ENCODE measurements at regions of chr7 and their contacts with region 1.

Region 1: DNA sequence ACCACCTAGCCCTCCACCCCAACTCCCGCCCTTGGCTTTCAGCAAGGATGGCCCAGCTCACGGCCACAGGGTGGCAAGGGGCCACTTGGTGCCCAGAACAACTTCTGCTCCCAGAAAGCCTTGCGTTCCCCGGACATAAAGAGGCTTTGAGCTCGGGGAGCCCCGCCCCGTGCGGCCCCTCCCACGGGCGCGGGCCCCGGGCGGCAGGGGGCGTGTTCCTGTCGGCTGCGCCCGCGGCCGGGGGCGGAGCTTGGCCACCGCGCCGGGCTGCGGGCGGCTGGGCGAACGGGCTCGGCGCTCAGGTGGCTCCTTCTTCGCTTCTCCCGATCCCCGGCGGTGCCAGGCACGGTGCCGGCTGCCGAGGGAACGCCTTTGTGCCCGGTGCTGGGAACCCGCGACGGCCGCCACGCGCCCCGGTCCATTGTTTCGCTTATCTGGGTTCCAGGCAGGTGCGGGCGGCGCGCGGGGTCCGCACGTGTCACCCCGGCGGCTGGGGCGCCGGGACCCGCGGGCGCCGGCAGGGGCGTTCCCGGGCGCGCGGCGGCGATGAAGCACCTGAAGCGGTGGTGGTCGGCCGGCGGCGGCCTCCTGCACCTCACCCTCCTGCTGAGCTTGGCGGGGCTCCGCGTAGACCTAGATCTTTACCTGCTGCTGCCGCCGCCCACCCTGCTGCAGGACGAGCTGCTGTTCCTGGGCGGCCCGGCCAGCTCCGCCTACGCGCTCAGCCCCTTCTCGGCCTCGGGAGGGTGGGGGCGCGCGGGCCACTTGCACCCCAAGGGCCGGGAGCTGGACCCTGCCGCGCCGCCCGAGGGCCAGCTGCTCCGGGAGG is at the start of gene NFE2L3:
- DNase-seq: peak; percentile 77
- H3K4me3 ChIP-seq: peak within 1 kb of the TSS; percentile 42 to 71 (median 68)
- H3K27ac ChIP-seq: peak within 1 kb of the TSS; percentile 92
- H3K4me1 ChIP-seq: peaks cover 45% of the 10 kb centered on the region
- H3K27me3 ChIP-seq: peaks cover 0 to 4% of the 10 kb centered on the region in 2 experiments
- CTCF ChIP-seq: peak in 1 of 2 donors; percentile 7
- POLR2A ChIP-seq: peak; percentile 46
- total RNA-seq, gene NFE2L3: 28.4 and 40.2 TPM in 2 replicates

Region 2: DNA sequence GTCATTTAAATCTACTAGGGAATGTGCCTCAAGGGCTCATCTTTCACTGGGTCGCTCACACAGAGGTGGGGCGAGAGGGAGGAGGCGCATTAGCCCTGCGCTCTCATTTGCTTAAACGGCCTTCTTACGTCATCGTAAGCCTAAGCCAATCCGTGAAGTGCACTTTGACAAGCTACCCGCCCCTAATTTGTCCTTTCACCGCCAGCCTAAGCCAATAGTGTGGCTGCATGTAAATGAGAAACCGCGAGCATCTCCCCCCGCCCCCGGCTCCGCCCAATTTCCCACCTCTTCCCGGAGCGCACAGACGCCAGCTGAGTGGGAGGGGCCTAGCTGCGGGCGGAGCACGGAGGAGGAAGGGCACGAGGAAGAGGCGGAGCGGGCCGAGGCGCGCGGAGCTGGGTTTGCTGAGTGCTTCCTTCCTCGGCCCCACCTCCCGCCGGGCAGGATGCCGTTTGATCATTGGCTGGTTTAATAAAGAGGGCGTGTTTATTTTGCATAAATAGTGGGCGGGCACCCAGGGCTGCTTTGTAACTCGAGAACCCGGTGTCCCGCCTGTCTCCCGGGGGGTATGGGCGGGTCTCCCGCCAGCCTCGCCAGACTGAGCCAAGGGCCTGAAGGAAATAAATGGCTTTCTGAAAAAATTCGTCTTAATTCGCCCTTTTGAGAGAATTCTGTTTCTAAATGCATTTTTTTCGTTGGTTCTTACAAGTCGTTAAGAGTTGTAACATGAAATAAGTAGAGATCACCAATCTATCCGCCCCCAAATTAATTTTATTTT is 289.7 kb before region 1 on chr7:
- CTCF ChIA-PET with region 1: interaction called, 3 read pairs
- POLR2A ChIA-PET with region 1: no interaction called
- dilution Hi-C with region 1: no loop called
- intact Hi-C with region 1: loop called (anchors 2 kb)
- DNase-seq: peak; percentile 100
- H3K4me3 ChIP-seq: peak overlapping the region in 1 of 3 experiments; percentile 43
- H3K27ac ChIP-seq: no peak overlapping the region
- H3K4me1 ChIP-seq: peaks cover 6% of the 10 kb centered on the region
- H3K27me3 ChIP-seq: peaks cover 60 to 83% of the 10 kb centered on the region in 2 experiments
- CTCF ChIP-seq: no peak
- POLR2A ChIP-seq: no peak

Region 3: DNA sequence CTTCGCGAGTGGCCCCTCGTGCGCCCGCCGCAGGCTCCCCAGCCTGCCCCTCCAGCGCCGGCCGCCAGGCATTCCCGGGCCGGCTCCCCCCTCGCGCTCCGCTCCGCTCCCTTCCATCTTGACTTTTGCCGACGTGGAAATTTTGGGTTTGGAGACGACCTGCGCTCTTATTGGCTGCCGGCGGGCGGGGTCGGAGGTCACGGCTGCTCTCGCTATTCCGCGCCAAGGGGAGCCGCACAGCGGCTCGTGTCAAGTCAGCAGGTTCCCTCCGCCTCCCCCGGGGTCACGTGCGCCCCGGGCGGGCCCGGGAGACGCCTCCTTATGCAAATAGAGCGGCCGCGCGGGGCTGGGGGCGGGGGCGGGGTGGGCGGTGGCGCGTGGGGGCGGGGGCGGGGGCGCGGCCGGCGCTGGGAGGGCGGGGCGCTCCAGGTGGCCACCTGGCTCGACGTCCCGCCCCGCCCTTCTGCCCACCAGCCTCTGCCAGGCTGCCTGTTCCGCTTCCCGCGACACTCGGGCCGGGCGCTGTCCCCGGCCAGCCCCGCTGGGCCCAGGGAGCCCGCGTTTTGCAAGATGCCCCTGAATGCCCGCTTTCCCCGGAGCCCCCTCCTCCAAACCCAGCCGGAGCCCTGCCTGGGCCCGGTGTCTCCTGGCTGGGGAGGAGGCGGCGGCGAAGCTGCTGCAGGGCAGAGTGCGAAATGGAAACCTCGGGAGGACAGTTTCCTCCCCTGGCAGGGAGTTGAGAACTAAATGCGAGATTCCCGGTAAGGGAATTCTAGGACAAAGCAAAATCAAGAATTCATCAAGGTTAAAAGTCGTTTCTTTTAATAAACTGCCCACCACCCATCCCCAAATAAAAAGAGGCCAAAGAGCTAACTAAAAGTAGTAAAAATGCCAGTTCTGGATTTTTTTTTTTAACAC is 200.9 kb before region 1 on chr7:
- CTCF ChIA-PET with region 1: no interaction called
- POLR2A ChIA-PET with region 1: no interaction called
- dilution Hi-C with region 1: no loop called
- intact Hi-C with region 1: loop called (anchors 5 kb)
- DNase-seq: peak; percentile 28
- H3K4me3 ChIP-seq: peak overlapping the region; percentile 15 to 43 (median 42)
- H3K27ac ChIP-seq: no peak overlapping the region
- H3K4me1 ChIP-seq: peaks cover 6% of the 10 kb centered on the region
- H3K27me3 ChIP-seq: peaks cover 33 to 37% of the 10 kb centered on the region in 2 experiments
- CTCF ChIP-seq: no peak
- POLR2A ChIP-seq: no peak

Region 4: DNA sequence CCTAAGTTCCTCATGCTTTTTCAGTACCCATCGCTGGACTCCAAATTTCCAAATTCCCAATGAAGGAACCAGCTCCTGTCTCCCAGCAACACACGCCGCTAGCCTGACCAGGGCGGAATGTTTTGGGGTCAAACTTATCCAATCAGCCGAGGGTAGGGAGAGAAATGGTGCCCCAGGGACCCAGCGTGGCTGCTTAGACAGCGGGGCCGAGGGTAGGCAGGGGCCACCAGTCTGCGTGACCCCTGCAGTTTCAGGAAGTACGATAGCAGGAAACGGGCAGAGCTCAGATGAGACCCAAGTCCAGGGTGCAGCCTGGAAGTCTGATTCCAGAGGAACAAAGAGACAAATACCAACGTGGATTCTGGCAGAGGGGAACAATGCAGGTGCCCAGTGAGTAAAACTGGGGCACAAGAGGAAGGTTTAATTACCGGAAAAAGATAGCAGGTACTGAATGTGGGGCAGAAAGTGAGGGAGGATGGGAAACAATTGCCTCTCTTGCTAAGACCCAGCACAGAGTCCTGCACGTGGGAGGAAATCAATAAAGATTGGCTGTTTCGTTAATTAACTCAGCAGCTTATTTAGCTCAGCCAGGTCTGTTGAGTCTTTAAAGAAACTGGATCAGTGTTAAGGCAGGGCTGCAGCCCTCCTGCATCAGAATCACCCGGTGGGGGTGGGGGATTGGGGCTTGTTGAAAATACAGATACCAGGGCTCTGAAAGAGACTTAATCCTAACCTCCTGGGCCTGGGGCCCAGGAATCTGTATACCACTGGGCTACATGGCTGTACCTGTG is 50.6 kb before region 1 on chr7:
- CTCF ChIA-PET with region 1: no interaction called
- POLR2A ChIA-PET with region 1: no interaction called
- dilution Hi-C with region 1: no loop called
- intact Hi-C with region 1: loop called (anchors 2 kb)
- DNase-seq: no peak
- H3K4me3 ChIP-seq: peak overlapping the region in 1 of 3 experiments; percentile 51
- H3K27ac ChIP-seq: peak overlapping the region; percentile 52
- H3K4me1 ChIP-seq: peaks cover 13% of the 10 kb centered on the region
- H3K27me3 ChIP-seq: no peaks in the 10 kb centered on the region
- CTCF ChIP-seq: no peak
- POLR2A ChIP-seq: no peak

Region 5: GRCh38 chr7:26179826-26180497 is 27.8 kb after region 1 on chr7:
- CTCF ChIA-PET with region 1: interaction called, 11 read pairs
- POLR2A ChIA-PET with region 1: interaction called, 3 read pairs
- dilution Hi-C with region 1: no loop called
- intact Hi-C with region 1: no loop called
- DNase-seq: no peak
- H3K4me3 ChIP-seq: no peak overlapping the region
- H3K27ac ChIP-seq: no peak overlapping the region
- H3K4me1 ChIP-seq: no peaks in the 10 kb centered on the region
- H3K27me3 ChIP-seq: no peaks in the 10 kb centered on the region
- CTCF ChIP-seq: no peak
- POLR2A ChIP-seq: peak; percentile 61

Region 6: DNA sequence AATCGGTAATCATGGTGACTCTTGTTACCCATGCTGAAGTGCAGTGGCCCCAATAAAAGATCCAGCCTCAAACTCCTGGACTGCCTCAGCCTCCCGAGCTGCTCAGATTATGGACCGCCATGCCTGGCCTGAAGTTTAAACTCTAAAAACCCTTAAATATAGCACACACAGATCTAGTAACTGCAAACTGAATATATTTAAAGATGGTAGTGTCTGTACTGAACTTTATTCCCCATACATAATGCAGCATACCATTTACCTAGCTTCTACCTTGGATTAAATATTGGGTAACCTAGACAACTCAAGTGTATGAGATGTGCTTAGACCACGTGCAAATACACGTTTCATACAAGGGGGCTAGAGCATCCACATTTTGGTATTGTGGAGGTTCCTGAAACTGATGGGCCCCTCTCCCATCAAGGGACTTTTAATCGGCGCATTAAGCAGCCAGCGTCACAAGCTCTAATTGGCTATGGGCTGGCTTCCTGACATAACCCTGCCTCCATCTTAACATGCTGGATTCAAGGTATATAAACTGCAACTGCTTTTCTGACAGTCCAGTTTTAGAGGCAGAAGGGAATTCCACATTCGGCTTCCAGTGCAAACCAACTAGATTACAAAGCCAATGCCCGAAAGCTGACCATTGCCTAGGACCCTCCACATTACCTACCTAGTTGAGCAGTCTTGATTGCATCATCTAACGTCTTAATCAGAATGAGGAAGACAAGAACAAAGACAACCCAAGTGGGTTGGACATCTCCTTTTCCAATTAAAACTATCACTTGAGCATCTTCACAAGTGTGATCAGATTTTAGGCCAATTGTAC is 35.4 kb after region 1 on chr7:
- CTCF ChIA-PET with region 1: interaction called, 8 read pairs
- POLR2A ChIA-PET with region 1: interaction called, 9 read pairs
- dilution Hi-C with region 1: no loop called
- intact Hi-C with region 1: loop called (anchors 2 kb)
- DNase-seq: no peak
- H3K4me3 ChIP-seq: no peak overlapping the region
- H3K27ac ChIP-seq: no peak overlapping the region
- H3K4me1 ChIP-seq: peaks cover 4% of the 10 kb centered on the region
- H3K27me3 ChIP-seq: no peaks in the 10 kb centered on the region
- CTCF ChIP-seq: no peak
- POLR2A ChIP-seq: peak; percentile 70

Region 7: GRCh38 chr7:26200444-26201246 is 48.5 kb after region 1 on chr7 and contains the start of gene HNRNPA2B1:
- CTCF ChIA-PET with region 1: interaction called, 19 read pairs
- POLR2A ChIA-PET with region 1: interaction called, 9 read pairs
- dilution Hi-C with region 1: no loop called
- intact Hi-C with region 1: loop called (anchors 1 kb)
- DNase-seq: peak; percentile 99
- H3K4me3 ChIP-seq: peak within 1 kb of the TSS; percentile 98 to 100 (median 98)
- H3K27ac ChIP-seq: peak within 1 kb of the TSS; percentile 97
- H3K4me1 ChIP-seq: peaks cover 40% of the 10 kb centered on the region
- H3K27me3 ChIP-seq: no peaks in the 10 kb centered on the region
- CTCF ChIP-seq: no peak
- POLR2A ChIP-seq: peak; percentile 100
- total RNA-seq, gene HNRNPA2B1: 703 and 717 TPM in 2 replicates

Region 8: GRCh38 chr7:26216049-26216448 is 63.9 kb after region 1 on chr7:
- CTCF ChIA-PET with region 1: no interaction called
- POLR2A ChIA-PET with region 1: no interaction called
- dilution Hi-C with region 1: no loop called
- intact Hi-C with region 1: no loop called
- DNase-seq: no peak
- H3K4me3 ChIP-seq: no peak overlapping the region
- H3K27ac ChIP-seq: no peak overlapping the region
- H3K4me1 ChIP-seq: no peaks in the 10 kb centered on the region
- H3K27me3 ChIP-seq: no peaks in the 10 kb centered on the region
- CTCF ChIP-seq: no peak
- POLR2A ChIP-seq: no peak